Calu3 (cell line): ENCODE measurements at regions of chr19 and their contacts with region 1.

Region 1: GRCh38 chr19:45523642-45524256 is 16.5 kb downstream of the VASP start:
- DNase-seq: peak; percentile 90
- H3K4me3 Mint-ChIP-seq: no peak overlapping the region
- H3K27ac Mint-ChIP-seq: peak overlapping the region; percentile 41
- H3K4me1 Mint-ChIP-seq: peaks cover 36% of the 10 kb centered on the region
- H3K27me3 Mint-ChIP-seq: no peaks in the 10 kb centered on the region
- CTCF ChIP-seq: peak; percentile 90

Region 2: GRCh38 chr19:45558399-45558878 is 34.7 kb after region 1 on chr19:
- CTCF ChIA-PET with region 1: no interaction called
- intact Hi-C with region 1: no loop called
- DNase-seq: peak; percentile 63
- H3K4me3 Mint-ChIP-seq: no peak overlapping the region
- H3K27ac Mint-ChIP-seq: no peak overlapping the region
- H3K4me1 Mint-ChIP-seq: peaks cover 9% of the 10 kb centered on the region
- H3K27me3 Mint-ChIP-seq: no peaks in the 10 kb centered on the region
- CTCF ChIP-seq: peak; percentile 53

Region 3: GRCh38 chr19:45569619-45570421 is 46.1 kb after region 1 on chr19:
- CTCF ChIA-PET with region 1: no interaction called
- intact Hi-C with region 1: loop called (anchors 1 kb)
- DNase-seq: peak; percentile 80
- H3K4me3 Mint-ChIP-seq: peak overlapping the region; percentile 13
- H3K27ac Mint-ChIP-seq: peak overlapping the region; percentile 32
- H3K4me1 Mint-ChIP-seq: peaks cover 31% of the 10 kb centered on the region
- H3K27me3 Mint-ChIP-seq: no peaks in the 10 kb centered on the region
- CTCF ChIP-seq: peak; percentile 83